Naive thymus-derived CD8-positive, alpha-beta T cell (primary cell): ENCODE measurements at regions of chr9 and their contacts with region 1.

Region 1: DNA sequence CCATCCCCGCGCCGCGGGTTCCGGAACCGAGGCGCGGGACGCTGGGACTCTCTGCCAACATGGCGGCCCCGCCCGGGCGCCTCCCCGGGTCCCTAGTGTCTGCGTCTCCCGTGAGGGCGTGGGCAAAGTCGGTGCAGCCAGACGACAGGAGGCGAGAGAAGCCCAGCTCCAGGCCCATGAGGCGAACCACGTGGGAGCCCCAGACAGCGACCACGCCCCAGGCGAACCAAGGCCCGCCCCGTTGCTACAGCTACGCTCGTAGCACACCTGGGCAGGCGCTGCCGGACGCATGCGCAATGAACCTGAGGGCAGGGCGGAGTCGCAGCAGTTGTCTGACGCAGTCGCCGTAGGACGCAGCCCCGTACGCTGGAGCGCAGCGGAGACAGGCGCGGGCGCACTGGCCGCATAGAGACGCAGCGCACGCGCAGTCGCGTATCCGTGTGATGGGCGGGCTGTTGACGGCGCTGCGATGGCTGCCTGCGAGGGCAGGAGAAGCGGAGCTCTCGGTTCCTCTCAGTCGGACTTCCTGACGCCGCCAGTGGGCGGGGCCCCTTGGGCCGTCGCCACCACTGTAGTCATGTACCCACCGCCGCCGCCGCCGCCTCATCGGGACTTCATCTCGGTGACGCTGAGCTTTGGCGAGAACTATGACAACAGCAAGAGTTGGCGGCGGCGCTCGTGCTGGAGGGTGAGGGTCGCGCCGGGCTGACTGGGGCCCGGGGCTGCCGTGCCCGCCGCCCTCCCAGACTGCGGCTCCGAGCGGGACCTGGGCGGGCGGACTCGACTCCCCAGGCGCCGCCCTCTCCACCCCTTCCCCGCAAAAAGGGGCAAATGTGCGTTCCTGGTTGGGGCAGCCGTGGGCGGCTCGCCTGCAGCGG is at the start of gene MAN1B1:
- DNase-seq: peak; percentile 93 to 100 (median 99)
- ATAC-seq: peak; percentile 86 to 88
- H3K4me3 Mint-ChIP-seq: peak within 1 kb of the TSS; percentile 80 to 97 (median 92)
- H3K27ac Mint-ChIP-seq: peak within 1 kb of the TSS; percentile 89 to 98 (median 96)
- H3K4me1 Mint-ChIP-seq: peaks cover 21 to 41% (median 37%) of the 10 kb centered on the region in 4 donors
- H3K27me3 Mint-ChIP-seq: no peaks in the 10 kb centered on the region
- polyA plus RNA-seq, gene MAN1B1: 30.6 to 46.6 (median 38.3) TPM

Region 2: DNA sequence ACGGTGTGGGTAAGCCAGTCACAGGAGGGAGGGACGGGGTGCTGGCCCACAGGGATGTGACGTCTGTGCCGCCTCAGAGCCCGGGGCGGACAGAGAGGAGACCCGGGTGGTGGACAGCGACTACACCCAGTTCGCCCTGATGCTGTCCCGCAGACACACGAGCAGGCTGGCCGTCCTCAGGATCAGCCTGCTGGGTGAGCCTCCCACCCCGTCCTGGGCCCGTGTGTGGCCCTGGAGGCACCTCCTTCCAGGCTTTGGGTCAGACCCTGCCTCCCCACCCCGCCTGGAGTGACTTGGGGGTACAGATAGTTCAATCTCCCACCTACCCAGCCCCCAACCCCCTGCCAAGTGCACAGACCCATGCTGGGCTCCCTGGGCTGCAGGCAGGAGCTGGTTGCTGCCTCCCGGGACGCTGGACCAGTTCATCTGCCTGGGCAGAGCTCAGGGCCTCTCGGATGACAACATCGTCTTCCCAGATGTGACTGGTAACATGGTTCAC is 132.9 kb before region 1 on chr9:
- POLR2A ChIA-PET with region 1: no interaction called
- DNase-seq: peak in 1 of 10 donors; percentile 43
- ATAC-seq: no peak
- H3K4me3 Mint-ChIP-seq: no peak overlapping the region
- H3K27ac Mint-ChIP-seq: peak overlapping the region in 1 of 10 donors; percentile 43
- H3K4me1 Mint-ChIP-seq: peaks cover 8 to 31% (median 20%) of the 10 kb centered on the region in 4 donors
- H3K27me3 Mint-ChIP-seq: no peaks in the 10 kb centered on the region

Region 3: GRCh38 chr9:137114610-137115391 is 28.0 kb after region 1 on chr9 and contains the start of gene DPP7:
- POLR2A ChIA-PET with region 1: interaction called, 15 read pairs
- DNase-seq: peak; percentile 67 to 87 (median 78)
- ATAC-seq: peak; percentile 94
- H3K4me3 Mint-ChIP-seq: peak within 1 kb of the TSS; percentile 45 to 79 (median 73)
- H3K27ac Mint-ChIP-seq: peak within 1 kb of the TSS in 6 of 10 donors; percentile 15 to 80 (median 62)
- H3K4me1 Mint-ChIP-seq: peaks cover 0 to 18% (median 5%) of the 10 kb centered on the region in 4 donors
- H3K27me3 Mint-ChIP-seq: no peaks in the 10 kb centered on the region
- polyA plus RNA-seq, gene DPP7: 98.7 to 126 (median 121) TPM

Region 4: DNA sequence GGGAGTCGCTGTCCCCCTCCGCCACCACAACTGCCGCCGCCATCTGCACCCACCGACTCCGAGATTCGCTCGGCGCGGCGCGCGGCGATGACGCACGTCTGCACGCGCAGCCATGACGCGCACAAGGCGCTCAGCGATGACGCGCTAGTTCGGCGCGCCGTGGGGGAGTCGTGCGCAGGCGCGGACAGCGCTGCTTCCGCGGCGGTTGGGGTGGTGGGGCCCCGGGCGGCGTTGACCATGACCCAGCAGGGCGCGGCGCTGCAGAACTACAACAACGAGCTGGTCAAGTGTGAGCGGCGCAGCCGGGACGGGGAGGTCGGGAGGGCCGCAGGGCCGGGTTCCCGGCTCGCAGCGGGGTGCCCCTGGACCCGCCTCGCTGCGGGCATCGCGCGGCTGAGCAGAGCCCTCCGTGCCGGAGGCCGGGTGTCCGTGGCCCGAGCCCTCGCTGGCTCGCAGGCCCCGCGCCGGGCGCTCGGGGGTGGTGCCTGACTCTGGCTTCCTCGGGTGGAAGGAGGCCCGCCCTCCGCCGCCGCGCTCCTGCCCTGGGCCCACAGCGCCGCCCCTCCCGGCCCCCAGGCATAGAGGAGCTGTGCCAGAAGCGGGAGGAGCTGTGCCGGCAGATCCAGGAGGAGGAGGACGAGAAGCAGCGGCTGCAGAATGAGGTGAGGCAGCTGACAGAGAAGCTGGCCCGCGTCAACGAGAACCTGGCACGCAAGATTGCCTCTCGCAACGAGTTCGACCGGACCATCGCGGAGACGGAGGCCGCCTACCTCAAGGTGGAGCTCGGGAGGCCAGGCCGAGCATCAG is 101.9 kb after region 1 on chr9 and contains the starts of genes ANAPC2 and SSNA1:
- POLR2A ChIA-PET with region 1: interaction called, 14 read pairs
- DNase-seq: peak; percentile 83 to 95 (median 94)
- ATAC-seq: peak; percentile 79
- H3K4me3 Mint-ChIP-seq: peak within 1 kb of the TSS; percentile 87 to 96 (median 92)
- H3K27ac Mint-ChIP-seq: peak within 1 kb of the TSS; percentile 83 to 98 (median 94)
- H3K4me1 Mint-ChIP-seq: peaks cover 8 to 50% (median 41%) of the 10 kb centered on the region in 4 donors
- H3K27me3 Mint-ChIP-seq: no peaks in the 10 kb centered on the region
- polyA plus RNA-seq, gene ANAPC2: 3.4 to 5.9 (median 4.3) TPM
- polyA plus RNA-seq, gene SSNA1: 97.8 to 123 (median 119) TPM

Region 5: GRCh38 chr9:137223078-137223970 is 136.6 kb after region 1 on chr9:
- POLR2A ChIA-PET with region 1: interaction called, 14 read pairs
- DNase-seq: peak; percentile 95 to 100 (median 98)
- ATAC-seq: peak; percentile 90 to 93
- H3K4me3 Mint-ChIP-seq: peak overlapping the region; percentile 73 to 89 (median 82)
- H3K27ac Mint-ChIP-seq: peak overlapping the region; percentile 60 to 92 (median 82)
- H3K4me1 Mint-ChIP-seq: peaks cover 5 to 14% (median 12%) of the 10 kb centered on the region in 4 donors
- H3K27me3 Mint-ChIP-seq: peaks cover 2 to 10% (median 3%) of the 10 kb centered on the region in 5 donors

Region 6: DNA sequence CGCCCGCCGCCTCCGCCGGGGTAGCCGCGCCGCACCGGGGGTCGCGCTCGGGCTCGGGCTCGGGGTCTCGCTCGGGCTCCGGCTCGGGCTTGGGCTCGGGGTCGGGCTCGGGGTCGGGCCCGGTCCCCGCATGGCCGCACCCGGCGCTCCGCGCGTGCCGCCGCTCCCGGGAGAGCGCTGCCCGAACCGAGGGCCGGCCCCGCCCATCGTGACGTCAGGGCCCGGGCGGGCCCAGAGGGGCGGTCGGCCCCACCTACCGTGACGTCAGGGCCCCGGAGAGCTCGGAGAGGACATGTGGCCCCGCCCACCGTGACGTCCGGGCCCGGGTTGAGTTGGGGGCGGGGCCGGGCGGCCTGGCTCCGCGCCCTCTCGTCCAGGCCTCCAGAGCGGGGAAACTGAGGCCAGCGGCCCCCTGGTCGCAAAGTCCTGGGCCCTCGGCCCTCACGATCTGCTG is 372.4 kb after region 1 on chr9 and contains the start of gene NSMF:
- POLR2A ChIA-PET with region 1: no interaction called
- DNase-seq: peak; percentile 86 to 97 (median 95)
- ATAC-seq: peak; percentile 49 to 52
- H3K4me3 Mint-ChIP-seq: peak within 1 kb of the TSS; percentile 60 to 80 (median 70)
- H3K27ac Mint-ChIP-seq: peak within 1 kb of the TSS; percentile 48 to 98 (median 90)
- H3K4me1 Mint-ChIP-seq: peaks cover 4 to 49% (median 43%) of the 10 kb centered on the region in 4 donors
- H3K27me3 Mint-ChIP-seq: no peaks in the 10 kb centered on the region
- polyA plus RNA-seq, gene NSMF: 7.7 to 14.7 (median 8.2) TPM